ENCODE measurements at regions of chr13 and their contacts with region 1.

Region 1: GRCh38 chr13:78978381-78978998 is 319.5 kb upstream of the OBI1 start:
- DNase-seq: no peak
- ATAC-seq: peak; percentile 89
- H3K4me3 ChIP-seq: no peak overlapping the region
- H3K27ac ChIP-seq: no peak overlapping the region
- H3K4me1 ChIP-seq: no peaks in the 10 kb centered on the region
- H3K27me3 ChIP-seq: no peaks in the 10 kb centered on the region
- CTCF ChIP-seq: peak; percentile 66

Region 2: GRCh38 chr13:78137404-78138142 is 840.9 kb before region 1 on chr13:
- intact Hi-C with region 1: loop called (anchors 10 kb)
- DNase-seq: no peak
- ATAC-seq: peak; percentile 95
- H3K4me3 ChIP-seq: no peak overlapping the region
- H3K27ac ChIP-seq: no peak overlapping the region
- H3K4me1 ChIP-seq: no peaks in the 10 kb centered on the region
- H3K27me3 ChIP-seq: no peaks in the 10 kb centered on the region
- CTCF ChIP-seq: peak; percentile 75

Region 3: GRCh38 chr13:78409172-78409571 is 569.3 kb before region 1 on chr13:
- intact Hi-C with region 1: no loop called
- DNase-seq: no peak
- ATAC-seq: no peak
- H3K4me3 ChIP-seq: no peak overlapping the region
- H3K27ac ChIP-seq: no peak overlapping the region
- H3K4me1 ChIP-seq: no peaks in the 10 kb centered on the region
- H3K27me3 ChIP-seq: no peaks in the 10 kb centered on the region
- CTCF ChIP-seq: no peak